ENCODE measurements at regions of chr11 and their contacts with region 1.

Region 1: GRCh38 chr11:48161951-48162884 is 54.4 kb upstream of the OR4B1 start:
- DNase-seq: no peak
- ATAC-seq: no peak
- H3K4me3 Mint-ChIP-seq: no peak overlapping the region
- H3K27ac Mint-ChIP-seq: peak overlapping the region; percentile 53
- H3K4me1 Mint-ChIP-seq: no peaks in the 10 kb centered on the region
- H3K27me3 Mint-ChIP-seq: no peaks in the 10 kb centered on the region

Region 2: DNA sequence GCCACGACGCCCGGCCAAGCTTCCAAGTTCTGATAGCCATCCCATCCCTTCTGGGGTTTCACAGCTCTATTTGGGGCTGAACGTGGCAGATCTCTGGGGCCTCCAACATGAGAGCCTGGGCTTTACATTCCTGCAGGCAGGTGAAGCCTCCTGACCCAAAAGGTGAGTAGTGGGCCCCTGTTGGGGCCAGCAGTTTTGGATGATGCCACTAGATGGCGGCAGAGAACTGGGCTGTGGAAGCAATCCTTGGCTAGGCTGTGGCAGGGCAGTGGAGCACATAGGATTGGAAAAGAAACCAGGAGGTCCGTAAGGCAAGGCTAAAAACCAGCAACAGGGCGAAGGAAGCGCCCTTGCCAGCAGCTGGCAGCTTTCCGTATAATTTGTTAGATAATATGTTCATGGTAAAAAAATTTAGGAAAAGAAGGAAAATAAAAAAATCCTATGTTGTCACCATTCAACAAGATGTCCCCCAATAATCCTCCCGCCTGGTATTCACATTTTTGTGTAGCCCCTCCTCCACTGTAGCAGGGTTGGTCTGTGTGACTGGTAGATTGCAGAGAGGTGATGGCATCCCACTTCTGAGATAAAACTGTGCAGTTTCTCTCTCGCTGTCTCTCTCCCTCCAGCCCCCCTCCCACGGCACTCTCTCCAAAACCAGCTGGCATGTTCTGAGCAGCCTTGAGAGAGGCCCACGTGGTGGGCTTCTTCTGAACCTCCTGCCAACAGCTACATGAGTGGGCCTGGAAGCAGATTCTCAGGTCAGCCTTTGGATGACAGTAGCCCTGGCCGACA is 10.8 kb after region 1 on chr11:
- CTCF ChIA-PET with region 1: interaction called, 14 read pairs
- POLR2A ChIA-PET with region 1: no interaction called
- DNase-seq: peak; percentile 69
- ATAC-seq: peak; percentile 69
- H3K4me3 Mint-ChIP-seq: no peak overlapping the region
- H3K27ac Mint-ChIP-seq: no peak overlapping the region
- H3K4me1 Mint-ChIP-seq: peaks cover 28% of the 10 kb centered on the region
- H3K27me3 Mint-ChIP-seq: no peaks in the 10 kb centered on the region

Measured in activated CD8-positive, alpha-beta T cell treated with anti-CD3 and anti-CD28 coated beads, Interleukin-2, amount 10 ng/mL, durations not matched to agents 7 days and 5 days (primary cell).